ENCODE measurements at regions of chr6 and their contacts with region 1.

Region 1: GRCh38 chr6:12343440-12344162 is 53.4 kb downstream of the EDN1 start:
- DNase-seq: peak; percentile 34
- ATAC-seq: peak; percentile 18
- H3K4me3 ChIP-seq: peak overlapping the region; percentile 32
- H3K27ac ChIP-seq: peak overlapping the region; percentile 90
- H3K4me1 ChIP-seq: peaks cover 39% of the 10 kb centered on the region
- H3K27me3 ChIP-seq: no peaks in the 10 kb centered on the region
- CTCF ChIP-seq: no peak

Region 2: GRCh38 chr6:12245763-12246718 is 97.6 kb before region 1 on chr6:
- CTCF ChIA-PET with region 1: no interaction called
- POLR2A ChIA-PET with region 1: no interaction called
- intact Hi-C with region 1: loop called (anchors 5 kb)
- DNase-seq: peak; percentile 69
- ATAC-seq: peak; percentile 89
- H3K4me3 ChIP-seq: no peak overlapping the region
- H3K27ac ChIP-seq: peak overlapping the region; percentile 50
- H3K4me1 ChIP-seq: peaks cover 36% of the 10 kb centered on the region
- H3K27me3 ChIP-seq: no peaks in the 10 kb centered on the region
- CTCF ChIP-seq: no peak

Region 3: GRCh38 chr6:12324514-12325147 is 19.0 kb before region 1 on chr6:
- CTCF ChIA-PET with region 1: interaction called, 5 read pairs
- POLR2A ChIA-PET with region 1: interaction called, 17 read pairs
- intact Hi-C with region 1: loop called (anchors 1 kb)
- DNase-seq: peak; percentile 37
- ATAC-seq: peak; percentile 10
- H3K4me3 ChIP-seq: peak overlapping the region; percentile 14
- H3K27ac ChIP-seq: peak overlapping the region; percentile 97
- H3K4me1 ChIP-seq: peaks cover 48% of the 10 kb centered on the region
- H3K27me3 ChIP-seq: no peaks in the 10 kb centered on the region
- CTCF ChIP-seq: no peak

Region 4: DNA sequence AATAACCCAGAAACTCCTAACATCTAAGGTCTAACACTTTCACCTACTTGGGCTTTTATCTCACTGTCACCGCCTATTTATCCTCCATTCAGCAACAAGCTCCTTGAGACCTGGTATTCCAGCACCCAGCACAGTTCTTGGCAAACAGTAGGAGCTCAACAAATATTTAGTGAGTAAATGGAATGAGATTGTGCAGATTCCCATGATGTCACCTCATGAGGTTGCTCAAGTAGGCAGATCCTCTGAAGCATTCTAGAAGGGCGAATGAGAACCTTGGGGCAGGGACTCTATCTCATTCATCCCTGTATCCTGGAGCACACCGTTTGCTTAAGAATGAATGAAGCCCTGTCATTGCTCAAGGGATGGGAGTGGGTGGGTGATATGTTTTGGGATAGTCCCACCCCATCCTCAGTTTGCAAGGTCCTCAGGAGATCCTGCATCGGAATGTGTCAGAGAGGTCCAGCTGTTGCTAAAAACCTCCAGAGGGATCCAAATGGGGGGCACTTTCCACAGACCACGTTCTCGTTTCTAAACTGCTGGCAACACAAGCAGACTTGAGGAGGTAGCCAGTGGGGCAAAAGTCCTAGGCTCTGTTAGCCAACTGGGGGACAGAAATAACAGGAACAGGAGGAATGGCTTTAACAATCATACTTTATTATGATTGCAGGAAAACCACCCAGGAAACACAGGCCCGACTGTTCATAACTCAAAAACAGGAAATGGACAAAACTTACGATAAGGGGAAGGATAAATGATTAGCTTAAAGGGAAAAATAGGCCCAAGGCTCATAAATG is 11.4 kb before region 1 on chr6:
- CTCF ChIA-PET with region 1: no interaction called
- POLR2A ChIA-PET with region 1: interaction called, 6 read pairs
- intact Hi-C with region 1: loop called (anchors 1 kb)
- DNase-seq: peak; percentile 53
- ATAC-seq: peak; percentile 9; the same call in 1 of the 2 replicates
- H3K4me3 ChIP-seq: no peak overlapping the region
- H3K27ac ChIP-seq: peak overlapping the region; percentile 48
- H3K4me1 ChIP-seq: peaks cover 58% of the 10 kb centered on the region
- H3K27me3 ChIP-seq: no peaks in the 10 kb centered on the region
- CTCF ChIP-seq: no peak

Measured in PC-3 (cell line).